Activated CD4-positive, alpha-beta memory T cell treated with anti-CD3 and anti-CD28 coated beads for 36 hours (primary cell): ENCODE measurements at regions of chr6 and their contacts with region 1.

Region 1: GRCh38 chr6:36423101-36423824 is 19.4 kb downstream of the PXT1 start:
- DNase-seq: peak; percentile 99
- H3K4me3 Mint-ChIP-seq: peak overlapping the region; percentile 80
- H3K27ac Mint-ChIP-seq: peak overlapping the region; percentile 84
- H3K4me1 Mint-ChIP-seq: peaks cover 17% of the 10 kb centered on the region
- H3K27me3 Mint-ChIP-seq: no peaks in the 10 kb centered on the region

Region 2: DNA sequence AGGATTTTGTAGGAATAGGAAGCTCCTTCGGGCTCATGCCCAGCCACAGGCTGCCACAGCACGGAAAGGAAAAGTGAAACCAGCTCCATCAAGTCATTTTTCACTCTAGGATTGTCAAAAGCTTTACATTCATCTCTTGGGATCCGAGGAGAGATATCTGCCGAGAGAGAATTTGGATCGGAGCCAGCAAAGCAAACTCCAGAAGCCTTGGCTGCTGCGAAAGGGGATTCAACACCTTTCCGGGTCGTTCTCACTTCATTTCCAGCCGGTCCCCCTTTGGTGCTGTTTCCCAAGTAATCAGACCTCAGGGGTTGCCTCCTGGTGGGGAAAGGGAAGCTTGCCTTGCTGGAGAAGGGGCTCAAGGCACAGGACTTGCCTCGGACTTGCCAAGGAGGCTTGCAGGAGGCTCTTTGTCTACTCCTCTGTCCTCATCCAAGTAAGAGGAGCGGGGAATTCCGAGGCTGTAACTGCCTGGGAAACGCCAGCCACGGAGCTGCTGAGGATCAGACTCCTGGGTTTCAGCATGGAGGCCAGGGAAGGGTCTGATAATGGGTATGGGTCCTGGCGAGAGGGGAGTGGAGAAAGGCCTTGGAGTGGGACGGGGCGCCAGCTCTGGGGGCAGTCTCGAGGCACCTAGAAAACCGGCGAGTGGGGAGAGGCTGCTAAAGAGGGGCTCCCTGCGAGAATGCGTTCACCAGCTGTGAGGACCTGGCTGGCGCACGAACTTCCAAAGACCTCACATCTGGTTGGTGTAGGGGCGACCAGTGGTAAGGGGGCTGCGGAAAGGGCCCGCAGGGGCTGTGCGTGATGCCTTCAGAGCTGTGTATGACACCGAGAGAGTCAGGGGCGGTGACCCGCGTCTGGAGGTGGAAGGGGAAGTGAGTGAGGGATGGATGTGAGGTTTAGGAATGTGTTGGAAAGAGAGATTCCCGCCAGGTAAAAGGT is 36.5 kb before region 1 on chr6:
- CTCF ChIA-PET with region 1: interaction called, 4 read pairs
- POLR2A ChIA-PET with region 1: no interaction called
- intact Hi-C with region 1: loop called (anchors 2 kb)
- DNase-seq: peak; percentile 27
- H3K4me3 Mint-ChIP-seq: peak overlapping the region; percentile 76
- H3K27ac Mint-ChIP-seq: peak overlapping the region; percentile 67
- H3K4me1 Mint-ChIP-seq: peaks cover 52% of the 10 kb centered on the region
- H3K27me3 Mint-ChIP-seq: peaks cover 10% of the 10 kb centered on the region

Region 3: GRCh38 chr6:36399970-36400369 is 23.3 kb before region 1 on chr6:
- CTCF ChIA-PET with region 1: no interaction called
- POLR2A ChIA-PET with region 1: no interaction called
- intact Hi-C with region 1: no loop called
- DNase-seq: no peak
- H3K4me3 Mint-ChIP-seq: no peak overlapping the region
- H3K27ac Mint-ChIP-seq: no peak overlapping the region
- H3K4me1 Mint-ChIP-seq: no peaks in the 10 kb centered on the region
- H3K27me3 Mint-ChIP-seq: peaks cover 7% of the 10 kb centered on the region

Region 4: GRCh38 chr6:36546920-36547645 is 123.8 kb after region 1 on chr6 and contains the start of gene STK38:
- CTCF ChIA-PET with region 1: interaction called, 7 read pairs
- POLR2A ChIA-PET with region 1: no interaction called
- intact Hi-C with region 1: loop called (anchors 2 kb)
- DNase-seq: peak; percentile 97
- H3K4me3 Mint-ChIP-seq: peak within 1 kb of the TSS; percentile 96
- H3K27ac Mint-ChIP-seq: peak within 1 kb of the TSS; percentile 97
- H3K4me1 Mint-ChIP-seq: peaks cover 41% of the 10 kb centered on the region
- H3K27me3 Mint-ChIP-seq: no peaks in the 10 kb centered on the region
- total RNA-seq, gene STK38: 25.8 to 27.5 TPM